Activated CD4-positive, alpha-beta memory T cell treated with anti-CD3 and anti-CD28 coated beads for 36 hours (primary cell): ENCODE measurements at regions of chr10 and their contacts with region 1.

Region 1: DNA sequence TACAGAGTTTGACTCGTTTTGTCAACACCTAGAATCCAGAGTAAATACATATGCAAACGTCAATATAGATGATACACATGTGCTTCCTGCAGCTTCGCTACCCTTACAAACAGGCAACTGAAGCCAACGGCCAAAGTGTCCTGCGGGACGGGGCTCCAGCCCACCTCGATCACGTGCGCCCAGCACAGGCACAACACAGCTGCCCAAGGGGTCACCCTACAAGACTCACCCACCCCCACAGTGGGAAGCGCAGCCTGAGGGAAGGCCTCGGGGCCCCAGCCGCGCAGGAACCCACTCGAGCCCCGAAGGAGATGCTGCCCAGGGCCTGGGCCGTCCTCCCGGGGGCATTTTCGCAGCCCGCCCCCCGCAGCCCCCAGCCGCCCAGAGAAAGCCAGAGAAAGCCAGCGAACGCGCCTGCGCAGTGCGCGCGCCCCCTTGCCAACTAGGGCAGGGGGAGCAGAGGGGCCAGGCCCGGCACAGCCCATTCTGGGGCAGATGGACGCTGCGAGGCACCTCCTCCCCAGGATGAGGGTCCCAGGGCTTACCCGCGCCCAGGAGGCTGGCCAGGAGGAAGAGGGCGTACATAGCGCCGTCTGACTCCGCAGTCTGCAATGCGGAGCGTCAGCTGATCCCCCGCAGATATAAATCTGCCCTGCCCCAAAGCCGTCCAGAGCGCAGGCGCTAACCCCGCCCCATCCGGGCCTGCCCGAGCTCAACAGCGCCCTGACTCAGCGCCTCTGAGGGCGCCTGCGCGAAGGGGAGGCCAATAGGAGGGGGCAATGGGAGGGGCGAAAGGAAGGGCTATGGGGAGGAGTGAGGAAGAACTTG is at the start of gene PSAP:
- DNase-seq: peak; percentile 99
- H3K4me3 Mint-ChIP-seq: peak within 1 kb of the TSS; percentile 82
- H3K27ac Mint-ChIP-seq: peak within 1 kb of the TSS; percentile 76
- H3K4me1 Mint-ChIP-seq: peaks cover 41% of the 10 kb centered on the region
- H3K27me3 Mint-ChIP-seq: no peaks in the 10 kb centered on the region
- total RNA-seq, gene PSAP: 137 to 144 TPM

Region 2: GRCh38 chr10:71748671-71749191 is 102.1 kb before region 1 on chr10:
- CTCF ChIA-PET with region 1: no interaction called
- POLR2A ChIA-PET with region 1: no interaction called
- intact Hi-C with region 1: loop called (anchors 1 kb)
- DNase-seq: peak; percentile 91
- H3K4me3 Mint-ChIP-seq: peak overlapping the region; percentile 73
- H3K27ac Mint-ChIP-seq: peak overlapping the region; percentile 98
- H3K4me1 Mint-ChIP-seq: peaks cover 97% of the 10 kb centered on the region
- H3K27me3 Mint-ChIP-seq: no peaks in the 10 kb centered on the region

Region 3: DNA sequence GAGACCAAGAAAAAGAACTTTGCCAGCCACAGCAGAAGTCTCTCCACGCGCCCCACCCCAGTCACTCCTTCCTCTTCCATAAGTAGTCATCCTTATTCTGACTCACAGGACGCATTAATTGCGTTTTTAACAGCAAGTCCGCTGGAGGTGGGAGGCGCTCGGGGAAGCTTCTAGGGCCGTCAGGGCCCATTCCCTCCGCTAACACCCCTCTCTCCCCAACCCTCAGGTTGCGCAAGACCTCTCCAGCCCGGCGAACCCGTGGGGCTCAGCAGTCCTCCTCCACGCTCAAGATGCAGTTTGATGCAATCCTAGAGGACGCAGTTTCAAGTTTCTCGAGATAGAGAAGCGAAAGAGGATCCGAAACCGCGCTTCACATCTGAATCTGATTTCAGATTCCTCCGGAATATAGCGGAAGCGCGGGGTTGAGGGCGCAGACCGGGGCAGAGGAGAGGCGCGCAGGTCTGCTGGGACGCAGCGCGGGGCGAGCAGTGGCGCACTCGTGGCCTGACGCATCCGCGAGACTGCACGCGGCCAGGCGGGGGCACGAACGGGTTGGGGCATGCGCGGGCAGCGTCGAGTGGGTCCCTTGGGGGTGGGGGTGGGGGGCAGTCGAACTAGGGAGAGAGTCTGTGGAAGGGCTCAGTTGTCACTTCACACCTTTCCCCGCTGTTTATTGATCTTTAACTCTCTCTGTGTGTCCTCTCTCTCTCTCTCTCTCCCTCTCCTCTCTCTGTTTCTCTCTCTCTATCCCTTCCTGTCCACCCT is 38.0 kb after region 1 on chr10:
- CTCF ChIA-PET with region 1: no interaction called
- POLR2A ChIA-PET with region 1: no interaction called
- intact Hi-C with region 1: loop called (anchors 2 kb)
- DNase-seq: peak; percentile 70
- H3K4me3 Mint-ChIP-seq: peak overlapping the region; percentile 70
- H3K27ac Mint-ChIP-seq: no peak overlapping the region
- H3K4me1 Mint-ChIP-seq: peaks cover 10% of the 10 kb centered on the region
- H3K27me3 Mint-ChIP-seq: peaks cover 15% of the 10 kb centered on the region

Region 4: GRCh38 chr10:71905164-71905563 is 54.3 kb after region 1 on chr10:
- CTCF ChIA-PET with region 1: no interaction called
- POLR2A ChIA-PET with region 1: no interaction called
- intact Hi-C with region 1: no loop called
- DNase-seq: no peak
- H3K4me3 Mint-ChIP-seq: no peak overlapping the region
- H3K27ac Mint-ChIP-seq: no peak overlapping the region
- H3K4me1 Mint-ChIP-seq: no peaks in the 10 kb centered on the region
- H3K27me3 Mint-ChIP-seq: no peaks in the 10 kb centered on the region

Region 5: GRCh38 chr10:72088889-72089575 is 238.2 kb after region 1 on chr10:
- CTCF ChIA-PET with region 1: no interaction called
- POLR2A ChIA-PET with region 1: no interaction called
- intact Hi-C with region 1: loop called (anchors 1 kb)
- DNase-seq: peak; percentile 76
- H3K4me3 Mint-ChIP-seq: peak overlapping the region; percentile 100
- H3K27ac Mint-ChIP-seq: peak overlapping the region; percentile 99
- H3K4me1 Mint-ChIP-seq: peaks cover 46% of the 10 kb centered on the region
- H3K27me3 Mint-ChIP-seq: no peaks in the 10 kb centered on the region

Region 6: DNA sequence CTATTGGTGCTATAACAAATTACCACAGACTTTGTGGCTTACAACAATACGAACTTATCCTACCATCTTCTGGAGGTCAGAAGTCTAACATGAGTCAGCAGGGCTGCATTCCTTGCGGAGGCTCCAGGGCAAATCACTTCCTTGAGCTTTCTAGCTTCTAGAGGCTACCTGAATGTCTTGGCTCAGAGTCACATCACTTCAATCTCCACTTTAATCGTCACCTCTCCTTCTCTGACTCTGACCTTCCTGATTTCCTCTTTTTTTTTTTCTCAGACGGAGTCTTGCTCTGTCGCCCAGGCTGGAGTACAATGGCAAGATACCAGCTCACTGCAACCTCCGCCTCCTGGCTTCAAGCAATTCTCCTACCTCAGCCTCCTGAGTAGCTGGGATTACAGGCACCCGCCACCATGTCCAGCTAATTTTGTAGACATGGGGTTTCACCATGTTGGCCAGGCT is 320.4 kb after region 1 on chr10:
- CTCF ChIA-PET with region 1: no interaction called
- POLR2A ChIA-PET with region 1: no interaction called
- intact Hi-C with region 1: no loop called
- DNase-seq: no peak
- H3K4me3 Mint-ChIP-seq: no peak overlapping the region
- H3K27ac Mint-ChIP-seq: no peak overlapping the region
- H3K4me1 Mint-ChIP-seq: peaks cover 10% of the 10 kb centered on the region
- H3K27me3 Mint-ChIP-seq: no peaks in the 10 kb centered on the region